Mammary epithelial cell (primary cell): ENCODE measurements at regions of chr12 and their contacts with region 1.

Region 1: DNA sequence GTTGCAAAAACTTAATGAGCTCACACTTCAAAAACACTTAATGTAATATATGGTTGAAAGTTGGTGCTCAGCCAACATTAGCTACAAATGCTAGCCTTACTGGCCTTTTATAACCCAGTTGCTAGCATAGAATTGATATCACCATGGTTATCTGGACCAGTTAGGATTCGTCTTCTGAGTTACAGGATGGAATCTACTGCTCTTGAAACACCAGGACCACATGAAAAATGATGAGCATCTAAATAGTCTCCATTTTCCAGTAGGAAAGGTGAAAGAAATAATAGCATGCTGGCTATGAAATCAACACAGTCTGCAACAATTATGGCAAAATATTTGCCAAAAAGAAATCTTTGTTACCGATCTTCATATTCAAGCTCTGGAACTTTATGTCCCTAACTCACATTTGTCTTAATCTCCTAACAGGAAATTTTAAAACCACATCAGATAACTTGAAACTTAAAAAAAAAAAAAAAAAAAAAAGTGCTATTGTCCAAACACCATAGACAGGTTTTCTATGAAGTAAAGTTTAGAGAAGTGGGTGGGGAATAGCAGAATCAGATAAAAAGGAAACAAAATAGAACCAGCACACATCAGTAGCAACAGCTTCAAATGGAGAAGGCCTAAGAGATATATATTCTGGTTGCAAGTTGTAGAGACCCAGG is 12.6 kb upstream of the CD69 start:
- DNase-seq: no peak
- H3K4me3 ChIP-seq: no peak overlapping the region
- H3K27ac ChIP-seq: no peak overlapping the region
- H3K4me1 ChIP-seq: no peaks in the 10 kb centered on the region
- H3K27me3 ChIP-seq: peaks cover 2% of the 10 kb centered on the region
- CTCF ChIP-seq: no peak

Region 2: GRCh38 chr12:9687228-9687627 is 86.1 kb before region 1 on chr12:
- CTCF ChIA-PET with region 1: no interaction called
- dilution Hi-C with region 1: no loop called
- in situ Hi-C with region 1: no loop called
- intact Hi-C with region 1: no loop called
- DNase-seq: no peak
- H3K4me3 ChIP-seq: no peak overlapping the region
- H3K27ac ChIP-seq: no peak overlapping the region
- H3K4me1 ChIP-seq: no peaks in the 10 kb centered on the region
- H3K27me3 ChIP-seq: no peaks in the 10 kb centered on the region
- CTCF ChIP-seq: no peak

Region 3: DNA sequence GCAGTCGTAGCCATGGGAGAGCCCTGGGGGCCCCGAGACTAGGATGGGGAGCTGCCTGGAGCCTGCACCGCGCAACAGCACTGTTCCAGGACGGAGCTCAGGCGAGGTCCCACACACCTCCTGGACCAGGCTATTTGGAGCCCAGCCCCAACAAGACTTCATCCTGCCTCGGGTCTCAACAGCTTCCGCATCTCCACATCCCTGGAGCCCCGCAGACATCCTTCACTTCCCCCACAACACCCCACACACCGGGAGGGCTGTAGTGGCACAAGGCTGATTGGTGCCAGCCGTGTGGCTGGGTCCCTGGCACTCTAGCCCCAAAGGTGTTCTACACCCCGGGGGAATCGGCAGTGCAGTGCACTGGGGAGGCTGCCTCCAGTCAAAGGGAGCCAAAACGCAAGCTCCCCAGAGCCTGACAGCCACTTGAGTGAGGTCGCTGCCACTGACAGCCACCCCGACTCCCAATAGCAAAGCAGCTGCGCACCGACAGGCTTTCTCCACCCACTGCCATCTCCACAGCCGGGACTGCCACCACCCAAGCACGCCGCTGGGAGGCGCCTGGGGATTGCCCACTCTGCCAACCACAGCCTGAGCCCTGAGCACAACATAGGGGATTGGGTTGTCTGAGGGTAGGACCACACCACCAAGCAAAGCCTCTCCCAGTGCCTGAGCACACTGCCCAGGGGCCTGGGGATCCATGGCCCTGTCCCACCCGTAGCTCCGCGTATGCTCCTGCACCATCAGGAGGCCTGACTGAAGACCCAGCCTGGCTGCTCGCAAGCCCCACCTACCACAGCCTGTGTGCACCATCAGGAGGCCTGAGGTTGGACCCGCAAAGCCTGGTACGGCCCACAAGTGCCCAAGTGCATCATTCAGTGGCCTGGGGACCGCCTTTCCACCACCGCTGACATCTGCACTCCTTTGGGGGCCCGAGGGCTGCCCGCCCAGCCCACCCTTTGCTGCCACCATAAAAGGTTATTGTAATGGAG is 40.8 kb after region 1 on chr12:
- CTCF ChIA-PET with region 1: no interaction called
- dilution Hi-C with region 1: no loop called
- in situ Hi-C with region 1: no loop called
- intact Hi-C with region 1: no loop called
- DNase-seq: peak; percentile 55
- H3K4me3 ChIP-seq: peak overlapping the region; percentile 20 to 42 (median 39)
- H3K27ac ChIP-seq: no peak overlapping the region
- H3K4me1 ChIP-seq: peaks cover 5% of the 10 kb centered on the region
- H3K27me3 ChIP-seq: no peaks in the 10 kb centered on the region
- CTCF ChIP-seq: peak; percentile 92 to 99

Region 4: GRCh38 chr12:10285919-10286318 is 512.6 kb after region 1 on chr12:
- CTCF ChIA-PET with region 1: no interaction called
- dilution Hi-C with region 1: no loop called
- in situ Hi-C with region 1: no loop called
- intact Hi-C with region 1: loop called (anchors 10 kb)
- DNase-seq: no peak
- H3K4me3 ChIP-seq: no peak overlapping the region
- H3K27ac ChIP-seq: no peak overlapping the region
- H3K4me1 ChIP-seq: no peaks in the 10 kb centered on the region
- H3K27me3 ChIP-seq: no peaks in the 10 kb centered on the region
- CTCF ChIP-seq: no peak